ENCODE measurements at regions of chr20 and their contacts with region 1.

Region 1: DNA sequence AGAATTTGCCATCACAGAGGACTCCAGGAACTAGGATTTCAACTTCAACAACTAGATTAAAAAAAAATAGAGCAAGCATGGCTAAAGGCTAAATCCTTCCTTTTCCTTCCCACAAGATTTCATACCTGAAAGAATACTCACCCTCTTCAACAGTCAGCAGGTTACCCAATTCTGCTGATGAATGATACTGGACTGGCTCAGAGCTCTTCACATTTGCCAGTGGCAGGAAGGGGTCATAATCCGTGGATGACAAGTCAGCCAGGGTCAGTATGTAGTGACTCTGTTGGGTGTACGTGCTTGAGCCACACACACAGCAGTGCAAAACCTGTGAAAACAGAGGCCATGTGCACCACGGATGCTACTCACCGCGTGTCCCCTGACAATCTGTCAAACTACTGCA is 152.9 kb downstream of the INSM1 start:
- DNase-seq: peak; percentile 90
- H3K4me3 ChIP-seq: no peak overlapping the region
- H3K27ac ChIP-seq: peak overlapping the region; percentile 75
- H3K4me1 ChIP-seq: peaks cover 21% of the 10 kb centered on the region
- H3K27me3 ChIP-seq: no peaks in the 10 kb centered on the region
- CTCF ChIP-seq: no peak

Region 2: DNA sequence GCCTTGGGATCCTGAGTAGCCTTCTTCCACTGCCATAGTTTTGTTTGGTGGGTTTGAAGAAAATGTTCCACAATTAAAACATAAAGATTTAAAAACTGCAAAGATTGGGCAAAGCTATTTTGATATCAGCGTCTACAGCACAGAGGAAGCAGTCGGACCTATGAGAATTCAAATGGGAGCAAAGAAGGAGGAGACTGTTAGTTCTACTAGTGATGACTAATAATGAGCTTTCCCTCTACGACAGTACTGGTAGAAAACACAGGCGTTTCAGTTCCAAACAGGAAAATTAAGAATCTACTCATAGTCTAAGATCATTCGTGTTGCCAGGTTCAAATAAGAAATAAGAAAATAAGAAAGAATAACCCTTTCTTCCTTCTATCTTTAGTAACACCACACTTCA is 31.7 kb before region 1 on chr20:
- CTCF ChIA-PET with region 1: no interaction called
- dilution Hi-C with region 1: no loop called
- in situ Hi-C with region 1: no loop called
- intact Hi-C with region 1: loop called (anchors 5 kb)
- DNase-seq: no peak
- H3K4me3 ChIP-seq: no peak overlapping the region
- H3K27ac ChIP-seq: no peak overlapping the region
- H3K4me1 ChIP-seq: peaks cover 25% of the 10 kb centered on the region
- H3K27me3 ChIP-seq: no peaks in the 10 kb centered on the region
- CTCF ChIP-seq: no peak

Measured in mammary epithelial cell (primary cell).